Calu3 (cell line): ENCODE measurements at regions of chr3 and their contacts with region 1.

Region 1: DNA sequence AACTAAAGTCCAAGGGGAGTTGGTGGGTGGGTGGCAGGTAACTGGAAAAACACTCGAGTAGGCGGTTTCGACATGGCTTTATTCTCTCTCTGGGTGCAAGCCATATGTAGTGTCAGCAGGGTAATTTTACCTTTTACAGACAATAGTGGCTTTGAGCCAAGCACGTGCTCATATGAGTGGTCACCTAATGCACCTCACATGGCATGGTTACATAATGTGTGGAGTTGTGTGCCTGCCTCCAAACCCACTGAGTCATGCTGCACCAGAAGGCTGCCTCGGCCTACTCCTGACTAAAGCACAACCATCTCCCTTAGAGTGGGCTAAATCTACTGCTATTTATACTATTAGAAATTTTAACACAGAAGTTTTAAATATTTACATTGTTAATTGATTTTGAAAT is 16.5 kb downstream of the CCRL2 start:
- DNase-seq: peak; percentile 42
- H3K4me3 Mint-ChIP-seq: no peak overlapping the region
- H3K27ac Mint-ChIP-seq: peak overlapping the region; percentile 63
- H3K4me1 Mint-ChIP-seq: peaks cover 26% of the 10 kb centered on the region
- H3K27me3 Mint-ChIP-seq: no peaks in the 10 kb centered on the region
- CTCF ChIP-seq: no peak

Region 2: GRCh38 chr3:46349485-46350261 is 73.9 kb before region 1 on chr3:
- CTCF ChIA-PET with region 1: no interaction called
- intact Hi-C with region 1: no loop called
- DNase-seq: no peak
- H3K4me3 Mint-ChIP-seq: no peak overlapping the region
- H3K27ac Mint-ChIP-seq: no peak overlapping the region
- H3K4me1 Mint-ChIP-seq: no peaks in the 10 kb centered on the region
- H3K27me3 Mint-ChIP-seq: peaks cover 81% of the 10 kb centered on the region
- CTCF ChIP-seq: no peak

Region 3: DNA sequence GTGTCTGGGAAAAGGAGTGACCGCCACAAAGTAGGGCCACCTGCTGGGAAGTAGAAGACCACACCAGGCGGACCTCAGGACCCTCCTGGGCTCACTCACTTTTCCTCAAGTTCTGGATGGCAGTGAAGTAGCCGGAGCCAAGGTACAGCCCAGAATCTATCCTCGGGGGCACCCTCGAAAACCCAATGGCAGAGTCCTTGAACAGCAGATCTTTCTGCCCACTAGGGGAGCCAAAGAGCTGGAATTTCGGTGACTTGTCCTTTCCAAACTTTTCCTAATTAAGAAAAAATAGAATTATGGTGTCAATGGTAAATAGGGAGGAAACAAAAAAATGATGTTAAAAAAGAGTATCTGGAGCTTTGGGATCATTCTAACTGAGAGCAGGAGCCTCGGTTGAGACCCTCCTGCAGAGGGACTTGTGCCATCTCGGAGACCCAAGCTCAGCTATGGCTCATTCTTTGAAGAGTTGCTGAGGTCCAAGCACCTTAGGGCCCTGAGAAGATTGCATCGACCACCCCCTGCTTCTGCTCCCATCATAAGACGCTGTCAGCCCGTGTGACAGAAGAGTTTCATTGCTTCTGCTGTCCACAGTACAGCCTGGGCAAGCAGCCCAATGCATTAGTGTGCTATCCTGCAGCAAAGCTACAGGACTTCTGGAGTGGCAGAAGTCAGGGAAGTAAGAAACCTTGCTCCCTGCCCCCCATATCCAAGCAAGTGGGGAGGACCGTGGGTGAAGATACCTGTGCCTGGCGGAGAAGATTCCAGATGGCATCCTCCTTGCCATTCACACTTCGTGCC is 26.4 kb after region 1 on chr3:
- CTCF ChIA-PET with region 1: interaction called, 4 read pairs
- intact Hi-C with region 1: loop called (anchors 1 kb)
- DNase-seq: peak; percentile 35
- H3K4me3 Mint-ChIP-seq: no peak overlapping the region
- H3K27ac Mint-ChIP-seq: no peak overlapping the region
- H3K4me1 Mint-ChIP-seq: no peaks in the 10 kb centered on the region
- H3K27me3 Mint-ChIP-seq: peaks cover 77% of the 10 kb centered on the region
- CTCF ChIP-seq: no peak